PC-9 (cell line): ENCODE measurements at regions of chr1 and their contacts with region 1.

Region 1: GRCh38 chr1:212469701-212470458 is 37.2 kb downstream of the NENF start:
- DNase-seq: peak; percentile 63 to 65
- H3K4me3 ChIP-seq: no peak overlapping the region
- H3K27ac ChIP-seq: 0 out of 2 replicates have a peak overlapping the region, but pooled peaks have one; percentile 8
- H3K4me1 ChIP-seq: peaks cover 38% of the 10 kb centered on the region
- H3K27me3 ChIP-seq: no peaks in the 10 kb centered on the region
- CTCF ChIP-seq: no peak

Region 2: DNA sequence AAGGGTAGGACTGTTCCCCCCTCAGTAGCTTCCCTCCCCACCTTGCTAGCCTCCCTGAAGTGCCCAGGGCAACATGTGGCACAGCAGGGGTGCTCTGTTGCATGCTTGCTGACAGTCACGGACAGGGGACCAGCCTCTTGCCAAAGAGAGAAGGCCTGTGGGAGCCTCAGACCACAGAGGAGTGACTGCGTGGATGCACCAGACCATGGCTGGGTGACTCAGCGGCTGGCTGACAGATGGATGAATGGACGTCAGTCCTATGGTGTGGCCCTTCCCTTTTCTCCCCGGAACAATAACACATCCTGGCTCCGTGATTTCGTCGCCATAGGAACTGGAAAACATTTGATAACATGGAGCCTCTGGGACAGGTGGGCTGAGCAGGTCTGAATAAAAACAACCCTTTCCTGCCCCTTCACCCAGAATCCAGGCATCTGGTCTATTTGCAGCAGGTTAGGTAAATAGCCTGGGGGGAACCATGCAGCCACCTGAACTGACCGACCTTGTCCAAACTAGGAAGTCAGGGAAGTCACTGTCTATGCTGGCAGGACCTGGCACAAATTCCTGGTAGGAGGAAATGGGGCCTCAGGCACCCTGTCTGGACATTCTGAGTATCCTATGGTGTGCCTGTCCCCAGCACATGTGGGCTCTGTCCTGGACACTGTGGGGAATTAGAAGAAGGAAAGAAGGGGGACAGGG is 16.2 kb after region 1 on chr1:
- CTCF ChIA-PET with region 1: no interaction called
- POLR2A ChIA-PET with region 1: no interaction called
- intact Hi-C with region 1: loop called (anchors 1 kb)
- DNase-seq: peak; percentile 95 to 100
- H3K4me3 ChIP-seq: no peak overlapping the region
- H3K27ac ChIP-seq: peak overlapping the region; percentile 81
- H3K4me1 ChIP-seq: peaks cover 74% of the 10 kb centered on the region
- H3K27me3 ChIP-seq: no peaks in the 10 kb centered on the region
- CTCF ChIP-seq: no peak

Region 3: GRCh38 chr1:212655668-212656423 is 186.0 kb after region 1 on chr1:
- CTCF ChIA-PET with region 1: no interaction called
- POLR2A ChIA-PET with region 1: no interaction called
- intact Hi-C with region 1: loop called (anchors 1 kb)
- DNase-seq: peak; percentile 86 to 91
- H3K4me3 ChIP-seq: no peak overlapping the region
- H3K27ac ChIP-seq: no peak overlapping the region
- H3K4me1 ChIP-seq: peaks cover 11% of the 10 kb centered on the region
- H3K27me3 ChIP-seq: peaks cover 8% of the 10 kb centered on the region; the same call in 1 of the 2 replicates
- CTCF ChIP-seq: no peak

Region 4: GRCh38 chr1:212791676-212792395 is 322.0 kb after region 1 on chr1 and contains the starts of genes NSL1 and TATDN3:
- CTCF ChIA-PET with region 1: no interaction called
- POLR2A ChIA-PET with region 1: interaction called, 13 read pairs
- intact Hi-C with region 1: no loop called
- DNase-seq: peak; percentile 79 to 95
- H3K4me3 ChIP-seq: peak within 1 kb of the TSS; percentile 93
- H3K27ac ChIP-seq: peak within 1 kb of the TSS; percentile 63
- H3K4me1 ChIP-seq: peaks cover 15% of the 10 kb centered on the region
- H3K27me3 ChIP-seq: no peaks in the 10 kb centered on the region
- CTCF ChIP-seq: no peak; the same call in 1 of the 2 replicates
- total RNA-seq, gene NSL1: 28.9 and 32.4 TPM in 2 replicates
- total RNA-seq, gene TATDN3: 10.2 and 12.3 TPM in 2 replicates

Region 5: GRCh38 chr1:212857992-212858460 is 388.1 kb after region 1 on chr1 and contains the start of gene FLVCR1:
- CTCF ChIA-PET with region 1: no interaction called
- POLR2A ChIA-PET with region 1: interaction called, 7 read pairs
- intact Hi-C with region 1: loop called (anchors 10 kb)
- DNase-seq: peak; percentile 92 to 95
- H3K4me3 ChIP-seq: peak within 1 kb of the TSS; percentile 87
- H3K27ac ChIP-seq: peak within 1 kb of the TSS; percentile 57
- H3K4me1 ChIP-seq: peaks cover 36% of the 10 kb centered on the region
- H3K27me3 ChIP-seq: no peaks in the 10 kb centered on the region
- CTCF ChIP-seq: no peak; the same call in 1 of the 2 replicates
- total RNA-seq, gene FLVCR1: 5.5 and 13.1 TPM in 2 replicates

Region 6: GRCh38 chr1:212918824-212919223 is 448.9 kb after region 1 on chr1:
- CTCF ChIA-PET with region 1: no interaction called
- POLR2A ChIA-PET with region 1: interaction called, 21 read pairs
- intact Hi-C with region 1: no loop called
- DNase-seq: no peak
- H3K4me3 ChIP-seq: no peak overlapping the region
- H3K27ac ChIP-seq: no peak overlapping the region
- H3K4me1 ChIP-seq: no peaks in the 10 kb centered on the region
- H3K27me3 ChIP-seq: peaks cover 23% of the 10 kb centered on the region
- CTCF ChIP-seq: no peak

Region 7: DNA sequence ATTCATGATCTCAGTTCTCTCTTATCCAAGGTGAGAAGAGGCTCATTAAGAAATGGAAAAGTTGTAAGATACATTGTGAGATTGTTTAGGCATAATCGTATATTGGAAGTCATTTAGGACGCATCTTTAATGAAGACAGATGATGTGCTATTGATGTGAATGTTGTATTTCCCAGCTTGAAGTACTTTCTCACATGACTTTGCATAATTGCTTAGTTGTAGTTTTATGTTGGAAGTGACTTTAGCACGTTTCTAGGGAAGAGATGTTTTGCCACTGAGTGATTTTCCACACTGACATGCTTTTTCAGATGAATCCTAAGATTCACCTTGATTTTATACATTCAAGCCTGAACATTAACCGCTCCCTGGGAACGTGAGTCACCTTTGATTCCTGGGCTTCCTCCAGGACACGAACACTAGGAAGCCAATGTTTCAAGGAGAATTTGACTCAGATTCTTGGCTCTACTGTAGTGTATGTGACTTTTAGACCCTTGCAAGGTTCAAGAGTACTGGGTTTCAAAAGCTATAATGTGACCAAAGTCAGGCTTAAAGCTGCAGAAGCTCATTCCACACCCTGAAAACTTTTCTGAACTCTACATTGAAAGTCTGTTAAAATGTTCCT is 517.9 kb after region 1 on chr1:
- CTCF ChIA-PET with region 1: interaction called, 11 read pairs
- POLR2A ChIA-PET with region 1: no interaction called
- intact Hi-C with region 1: no loop called
- DNase-seq: no peak
- H3K4me3 ChIP-seq: no peak overlapping the region
- H3K27ac ChIP-seq: no peak overlapping the region
- H3K4me1 ChIP-seq: no peaks in the 10 kb centered on the region
- H3K27me3 ChIP-seq: no peaks in the 10 kb centered on the region
- CTCF ChIP-seq: no peak